Posterior vena cava (tissue), 2 donors: ENCODE measurements at regions of chr12 and their contacts with region 1.

Region 1: GRCh38 chr12:66269757-66270383 is 32.4 kb upstream of the HELB start:
- DNase-seq: no peak

Region 2: GRCh38 chr12:66693901-66694675 is 424.2 kb after region 1 on chr12:
- intact Hi-C with region 1: loop called (anchors 10 kb)
- DNase-seq: no peak